Endothelial cell of umbilical vein (primary cell): ENCODE measurements at regions of chr11 and their contacts with region 1.

Region 1: GRCh38 chr11:130145975-130146776 is 13.4 kb upstream of the ST14 start:
- DNase-seq: peak; percentile 26
- H3K4me3 ChIP-seq: no peak overlapping the region
- H3K27ac ChIP-seq: no peak overlapping the region
- H3K4me1 ChIP-seq: peaks cover 6% of the 10 kb centered on the region
- H3K27me3 ChIP-seq: no peaks in the 10 kb centered on the region
- CTCF ChIP-seq: peak; percentile 15 to 41
- POLR2A ChIP-seq: no peak

Region 2: DNA sequence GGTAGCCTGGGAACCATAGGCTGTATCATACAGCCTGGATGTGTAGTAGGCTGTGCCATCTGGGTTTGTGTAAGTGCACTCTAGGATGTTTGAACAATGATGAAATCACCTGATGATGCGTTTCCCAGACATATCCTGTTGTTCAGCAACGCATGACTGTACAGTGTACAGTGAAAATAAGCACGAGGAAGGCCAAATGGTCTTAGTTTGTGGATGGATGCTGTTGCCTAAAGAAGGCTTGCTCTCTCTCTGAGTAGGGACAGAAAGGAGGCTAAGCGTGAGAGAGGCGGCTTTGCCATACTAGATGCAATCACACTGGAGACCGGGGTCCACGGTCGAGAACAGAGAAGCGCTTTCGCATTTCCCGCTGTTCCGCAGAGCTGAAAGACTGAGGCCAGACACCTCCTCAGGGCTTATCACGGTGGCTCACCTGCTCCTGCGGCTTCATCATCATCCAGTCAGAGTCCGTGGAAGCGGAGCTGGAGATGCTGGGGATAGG is 104.0 kb before region 1 on chr11:
- CTCF ChIA-PET with region 1: no interaction called
- POLR2A ChIA-PET with region 1: no interaction called
- dilution Hi-C with region 1: no loop called
- intact Hi-C with region 1: no loop called
- DNase-seq: peak; percentile 95
- H3K4me3 ChIP-seq: no peak overlapping the region
- H3K27ac ChIP-seq: peak overlapping the region; percentile 88
- H3K4me1 ChIP-seq: peaks cover 17% of the 10 kb centered on the region
- H3K27me3 ChIP-seq: no peaks in the 10 kb centered on the region
- CTCF ChIP-seq: no peak
- POLR2A ChIP-seq: no peak

Region 3: GRCh38 chr11:130156108-130157022 is 10.2 kb after region 1 on chr11:
- CTCF ChIA-PET with region 1: interaction called, 12 read pairs
- POLR2A ChIA-PET with region 1: no interaction called
- dilution Hi-C with region 1: no loop called
- intact Hi-C with region 1: no loop called
- DNase-seq: no peak
- H3K4me3 ChIP-seq: no peak overlapping the region
- H3K27ac ChIP-seq: no peak overlapping the region
- H3K4me1 ChIP-seq: no peaks in the 10 kb centered on the region
- H3K27me3 ChIP-seq: peaks cover 31 to 33% of the 10 kb centered on the region in 2 experiments
- CTCF ChIP-seq: no peak
- POLR2A ChIP-seq: no peak